Activated naive CD4-positive, alpha-beta T cell treated with anti-CD3 and anti-CD28 coated beads, Interleukin-2, amount 10 ng/mL, durations not matched to agents 7 days and 5 days (primary cell): ENCODE measurements at regions of chrX and their contacts with region 1.

Region 1: DNA sequence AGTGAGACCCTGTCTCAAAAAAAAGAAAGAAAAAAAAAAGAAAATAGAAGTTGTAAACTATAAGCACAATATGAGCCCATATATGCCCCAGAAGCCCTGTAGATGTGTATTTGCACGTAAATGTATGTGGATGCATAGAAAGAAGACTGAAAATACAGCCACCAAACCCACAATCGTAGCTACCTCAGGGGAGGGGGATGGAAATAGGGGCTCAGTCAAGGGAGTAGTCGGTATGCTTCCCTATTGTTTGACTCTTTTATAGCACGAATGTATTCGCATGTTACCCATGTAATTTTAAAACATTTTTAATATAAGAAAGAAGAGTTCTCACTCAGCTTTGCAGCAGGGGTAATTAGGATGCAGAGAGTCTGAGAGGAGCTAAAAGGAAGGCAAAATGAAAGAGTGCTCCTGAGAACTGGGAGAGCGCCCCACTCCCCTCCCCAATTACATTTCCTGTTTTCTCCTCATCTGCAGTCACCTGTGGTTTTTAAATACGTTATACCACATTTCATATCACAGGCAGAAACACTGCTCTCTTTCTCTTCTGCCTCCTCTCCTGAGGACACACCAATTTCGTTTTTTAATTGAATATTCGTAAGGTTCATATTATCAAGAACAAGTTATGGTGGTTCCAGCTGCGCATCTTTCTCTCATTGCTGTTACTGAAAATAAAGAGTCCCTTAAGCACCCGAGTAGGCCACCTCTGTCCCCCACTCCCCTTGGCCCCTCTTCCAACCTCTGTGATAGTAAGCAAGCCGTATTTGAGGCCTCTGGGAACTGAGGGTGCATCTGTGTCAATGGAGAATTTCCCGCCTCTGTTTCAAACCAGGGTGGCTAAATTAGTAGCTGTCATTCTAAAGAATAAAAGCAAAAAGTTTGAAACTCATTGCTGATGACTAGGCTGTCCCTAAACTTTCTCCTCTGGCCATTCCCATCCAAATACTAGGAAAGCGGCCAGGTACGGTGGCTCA is 10.7 kb downstream of the SEPTIN6 start:
- DNase-seq: peak; percentile 58
- H3K4me3 Mint-ChIP-seq: peak overlapping the region; percentile 75
- H3K27ac Mint-ChIP-seq: peak overlapping the region; percentile 100
- H3K4me1 Mint-ChIP-seq: peaks cover 72% of the 10 kb centered on the region
- H3K27me3 Mint-ChIP-seq: no peaks in the 10 kb centered on the region

Region 2: DNA sequence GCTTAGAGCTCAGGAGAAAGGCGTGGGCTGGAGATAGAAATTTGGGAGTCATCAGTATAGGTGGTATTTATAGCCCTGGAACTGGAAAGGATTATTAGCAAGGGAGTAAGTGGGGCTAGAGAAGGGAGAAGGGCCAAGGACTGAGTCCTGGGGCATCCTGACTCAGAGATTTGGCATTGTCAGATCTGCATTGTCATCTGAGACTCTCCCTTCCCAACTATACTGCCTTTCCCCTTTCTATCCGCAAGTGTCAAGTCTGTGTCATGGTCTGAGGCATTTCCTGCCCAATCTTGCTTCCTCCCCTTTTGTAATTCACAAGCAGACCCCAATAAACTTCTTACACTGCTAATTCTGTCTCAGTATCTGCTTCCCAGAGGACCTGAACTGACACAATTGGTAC is 307.6 kb before region 1 on chrX:
- CTCF ChIA-PET with region 1: no interaction called
- DNase-seq: no peak
- H3K4me3 Mint-ChIP-seq: no peak overlapping the region
- H3K27ac Mint-ChIP-seq: no peak overlapping the region
- H3K4me1 Mint-ChIP-seq: no peaks in the 10 kb centered on the region
- H3K27me3 Mint-ChIP-seq: peaks cover 5% of the 10 kb centered on the region

Region 3: DNA sequence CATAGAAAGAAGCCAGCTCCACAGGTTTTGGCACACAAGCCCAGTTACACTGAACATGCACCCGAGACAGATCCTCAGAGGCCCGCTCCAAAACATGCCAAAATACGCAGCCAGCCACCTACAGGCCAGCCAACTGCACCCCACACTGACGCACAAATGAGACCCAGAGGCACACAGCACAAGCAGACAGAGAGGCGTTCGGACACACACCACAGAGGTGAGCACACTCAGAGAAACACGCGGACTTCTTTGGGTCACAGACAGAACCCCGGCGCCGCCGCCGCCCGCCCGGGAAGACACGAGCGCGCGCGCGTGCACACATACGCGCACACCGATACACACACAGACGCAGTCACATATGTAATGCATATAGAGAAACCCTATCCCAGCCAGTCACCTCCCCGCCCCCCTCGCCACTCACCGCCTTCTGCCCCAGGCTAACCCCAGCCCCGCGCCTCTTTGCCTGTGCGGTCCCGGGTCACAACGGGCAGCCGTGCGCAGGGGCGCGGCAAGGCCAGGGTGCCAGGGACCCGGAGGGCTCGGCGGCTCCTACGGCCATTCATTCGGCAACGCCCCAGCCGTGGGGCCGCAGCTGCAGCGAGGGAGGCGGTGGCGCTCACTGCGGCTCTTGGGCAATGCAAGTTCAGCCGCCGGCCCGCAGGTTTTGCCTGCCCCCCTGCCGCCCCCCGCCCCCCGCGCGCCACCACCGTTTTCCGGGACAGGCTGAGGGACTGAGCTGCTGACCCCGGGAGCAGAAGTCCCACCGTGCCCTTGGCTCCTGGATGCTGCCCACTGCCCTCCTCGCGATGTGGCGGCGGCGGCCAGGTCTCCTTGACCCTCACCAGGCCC is 10.1 kb after region 1 on chrX:
- CTCF ChIA-PET with region 1: interaction called, 13 read pairs
- DNase-seq: peak; percentile 75
- H3K4me3 Mint-ChIP-seq: peak overlapping the region; percentile 91
- H3K27ac Mint-ChIP-seq: peak overlapping the region; percentile 100
- H3K4me1 Mint-ChIP-seq: peaks cover 32% of the 10 kb centered on the region
- H3K27me3 Mint-ChIP-seq: peaks cover 10% of the 10 kb centered on the region

Region 4: GRCh38 chrX:119721487-119721886 is 39.2 kb after region 1 on chrX:
- CTCF ChIA-PET with region 1: no interaction called
- DNase-seq: no peak
- H3K4me3 Mint-ChIP-seq: no peak overlapping the region
- H3K27ac Mint-ChIP-seq: no peak overlapping the region
- H3K4me1 Mint-ChIP-seq: no peaks in the 10 kb centered on the region
- H3K27me3 Mint-ChIP-seq: peaks cover 6% of the 10 kb centered on the region